BJ (cell line): ENCODE measurements at regions of chr2 and their contacts with region 1.

Region 1: GRCh38 chr2:231227309-231228162 is 29.1 kb downstream of the ARMC9 start:
- DNase-seq: no peak
- H3K4me3 ChIP-seq: no peak overlapping the region
- H3K27me3 ChIP-seq: no peaks in the 10 kb centered on the region
- CTCF ChIP-seq: peak; percentile 79

Region 2: DNA sequence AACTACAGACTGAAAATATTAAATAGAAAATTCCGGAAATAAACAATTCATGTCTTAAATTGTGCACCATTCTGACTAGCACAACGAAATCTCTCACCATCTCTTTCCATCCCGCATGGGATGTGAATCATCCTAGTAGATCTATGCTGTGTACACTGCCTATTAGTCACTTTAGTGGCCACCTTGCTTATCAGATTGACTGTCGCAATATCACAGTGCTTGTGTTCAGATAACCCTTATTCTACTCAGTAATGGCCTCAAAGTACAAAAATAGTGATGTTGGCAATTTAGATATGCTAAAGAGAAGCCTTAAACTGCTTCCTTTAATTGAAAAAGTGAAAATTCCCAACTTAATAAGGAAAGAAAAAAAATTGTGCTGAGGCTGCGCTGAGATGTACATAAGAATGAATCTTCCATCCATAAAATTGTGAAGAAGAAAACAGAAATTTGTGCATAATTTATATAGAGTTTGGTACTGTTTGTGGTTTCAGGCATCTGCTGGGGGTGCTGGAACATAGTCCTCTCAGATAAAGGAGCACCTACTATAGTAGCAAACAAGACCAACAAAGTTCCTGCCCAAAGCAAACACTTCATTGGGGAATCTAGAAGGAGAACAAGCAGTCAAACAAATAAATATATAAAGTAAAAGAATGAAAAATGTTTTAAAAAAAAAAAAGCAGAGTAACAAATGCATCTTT is 158.9 kb before region 1 on chr2:
- CTCF ChIA-PET with region 1: no interaction called
- POLR2A ChIA-PET with region 1: no interaction called
- DNase-seq: no peak
- H3K4me3 ChIP-seq: no peak overlapping the region
- H3K27me3 ChIP-seq: no peaks in the 10 kb centered on the region
- CTCF ChIP-seq: no peak

Region 3: GRCh38 chr2:231238689-231239088 is 11.2 kb after region 1 on chr2:
- CTCF ChIA-PET with region 1: interaction called, 11 read pairs
- POLR2A ChIA-PET with region 1: no interaction called
- DNase-seq: no peak
- H3K4me3 ChIP-seq: no peak overlapping the region
- H3K27me3 ChIP-seq: no peaks in the 10 kb centered on the region
- CTCF ChIP-seq: no peak

Region 4: GRCh38 chr2:231250161-231250560 is 22.6 kb after region 1 on chr2:
- CTCF ChIA-PET with region 1: interaction called, 10 read pairs
- POLR2A ChIA-PET with region 1: no interaction called
- DNase-seq: no peak
- H3K4me3 ChIP-seq: no peak overlapping the region
- H3K27me3 ChIP-seq: no peaks in the 10 kb centered on the region
- CTCF ChIP-seq: no peak